ENCODE measurements at regions of chr1 and their contacts with region 1.

Region 1: DNA sequence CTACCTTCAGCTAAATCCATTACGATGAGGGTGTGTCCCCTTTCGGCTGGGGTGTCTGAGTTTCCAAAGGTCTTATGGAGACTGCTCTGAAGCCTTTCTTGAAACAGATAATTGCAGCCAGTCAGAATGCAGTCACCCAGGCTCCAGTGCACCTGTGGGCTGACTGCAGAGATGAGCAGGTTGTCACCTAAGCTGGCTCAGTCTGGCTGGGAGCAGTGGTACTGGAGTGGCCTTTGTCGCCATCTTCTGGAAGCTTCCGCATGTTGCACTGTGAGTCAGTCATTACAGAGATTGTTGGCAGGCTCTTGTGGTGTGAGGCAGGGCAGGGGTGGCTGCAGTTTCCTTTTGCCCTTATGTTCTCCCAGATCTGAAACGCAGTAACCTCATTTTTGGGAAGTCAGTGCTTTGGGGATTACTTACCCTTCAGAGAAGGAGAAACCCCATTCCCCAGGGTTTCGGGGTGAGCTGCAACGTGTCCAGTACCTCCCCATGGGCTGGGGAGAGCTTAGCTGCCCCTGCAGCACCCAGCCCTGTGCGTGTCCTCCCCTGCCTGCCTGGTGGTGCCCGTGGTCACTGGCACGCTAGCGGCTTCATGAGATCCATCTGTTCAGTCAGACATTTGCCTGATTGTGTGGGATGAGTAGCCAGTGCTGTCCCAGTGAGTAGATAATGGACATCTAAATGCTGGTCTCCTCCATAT is 48.0 kb downstream of the SMYD2 start:
- DNase-seq: peak; percentile 71 to 91 (median 87)
- ATAC-seq: peak; percentile 83 to 88
- H3K4me3 ChIP-seq: no peak overlapping the region
- H3K27ac ChIP-seq: no peak overlapping the region
- H3K4me1 ChIP-seq: peaks cover 2% of the 10 kb centered on the region
- H3K27me3 ChIP-seq: no peaks in the 10 kb centered on the region

Region 2: DNA sequence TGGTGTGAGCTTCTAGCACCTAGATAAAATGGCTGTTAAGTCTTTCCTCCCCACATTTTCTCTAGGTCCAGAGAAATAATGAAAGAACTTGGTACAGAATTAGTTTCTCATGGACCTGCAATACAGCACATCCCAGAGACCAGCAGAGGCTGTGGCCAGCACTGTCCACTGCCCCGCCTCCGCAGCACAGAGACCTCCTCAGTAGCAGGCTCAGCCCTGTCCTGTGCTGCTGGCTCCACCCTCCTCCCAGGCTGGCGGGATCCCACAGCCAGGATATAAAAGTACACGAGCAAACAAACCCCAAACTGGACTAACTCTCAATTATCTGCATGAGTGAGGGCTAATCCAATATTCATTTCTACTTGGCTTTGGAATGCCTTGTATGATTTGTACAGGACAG is 876.4 kb before region 1 on chr1:
- intact Hi-C with region 1: no loop called
- DNase-seq: no peak
- ATAC-seq: no peak
- H3K4me3 ChIP-seq: no peak overlapping the region
- H3K27ac ChIP-seq: no peak overlapping the region
- H3K4me1 ChIP-seq: peaks cover 1% of the 10 kb centered on the region
- H3K27me3 ChIP-seq: no peaks in the 10 kb centered on the region

Region 3: DNA sequence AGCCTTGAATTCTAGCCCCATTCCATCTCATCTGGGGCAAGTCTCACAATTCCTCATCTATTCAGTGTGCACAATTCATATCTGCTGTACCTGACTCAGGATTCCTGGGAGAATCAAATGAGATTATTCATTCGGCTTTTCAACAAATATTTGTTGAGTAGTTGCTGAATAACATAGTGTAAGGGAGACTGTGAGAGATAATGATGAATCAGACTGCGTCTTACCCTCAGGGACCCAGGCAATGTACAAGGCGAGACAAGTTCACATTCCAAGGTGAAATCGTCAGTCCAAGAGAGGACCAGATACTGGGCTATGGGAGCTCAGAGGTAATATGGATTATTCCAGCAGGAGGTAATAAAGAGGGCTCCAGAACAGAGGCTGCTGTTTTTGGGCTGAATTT is 115.8 kb before region 1 on chr1:
- intact Hi-C with region 1: loop called (anchors 2 to 10 kb)
- DNase-seq: no peak
- ATAC-seq: no peak
- H3K4me3 ChIP-seq: no peak overlapping the region
- H3K27ac ChIP-seq: no peak overlapping the region
- H3K4me1 ChIP-seq: no peaks in the 10 kb centered on the region
- H3K27me3 ChIP-seq: peaks cover 2% of the 10 kb centered on the region

Region 4: DNA sequence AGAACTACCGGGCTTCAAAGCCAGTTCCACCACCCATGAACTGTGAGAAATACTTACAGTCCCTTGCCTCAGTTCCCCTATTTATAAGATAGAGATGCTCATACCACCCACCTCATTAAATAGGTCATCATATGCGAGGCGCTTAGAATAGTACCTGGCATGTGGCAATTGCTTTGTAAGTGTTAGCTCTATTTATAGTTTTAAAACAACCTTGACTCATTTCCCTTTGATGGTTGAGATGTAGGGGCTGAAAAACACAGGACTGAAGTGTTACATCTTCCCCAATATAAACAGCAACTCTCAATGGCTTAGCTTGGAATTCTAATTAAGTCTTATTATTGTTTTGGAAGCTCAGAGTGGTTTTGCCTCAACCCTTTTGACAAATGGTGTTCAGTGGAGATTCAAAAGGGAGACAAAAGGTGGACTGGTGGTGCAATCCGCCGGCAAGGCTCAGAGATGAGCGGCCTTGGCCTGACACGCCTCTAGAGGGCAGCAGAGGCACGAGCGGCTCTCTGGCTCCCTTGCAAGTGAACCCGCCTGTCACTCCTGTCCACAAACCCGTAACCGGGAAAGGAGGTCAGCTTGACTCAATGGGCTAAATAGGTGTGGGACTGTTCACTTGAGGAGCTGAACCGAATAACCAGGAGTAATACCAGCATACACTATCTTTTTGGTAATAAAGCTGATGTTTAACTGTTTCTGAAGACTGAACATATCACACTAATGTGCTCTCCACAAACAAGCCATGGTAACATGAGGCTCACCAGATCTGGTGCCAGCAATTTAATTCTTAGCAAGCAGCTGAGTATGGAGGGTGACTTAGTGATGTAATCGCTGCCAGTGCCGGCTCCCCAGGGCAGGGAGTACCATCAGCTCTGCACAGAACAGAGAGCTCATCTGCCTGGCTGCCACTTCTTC is 67.5 kb before region 1 on chr1:
- intact Hi-C with region 1: loop called (anchors 2 to 5 kb)
- DNase-seq: peak; percentile 79 to 92 (median 90)
- ATAC-seq: peak; percentile 96 to 98
- H3K4me3 ChIP-seq: no peak overlapping the region
- H3K27ac ChIP-seq: no peak overlapping the region
- H3K4me1 ChIP-seq: no peaks in the 10 kb centered on the region
- H3K27me3 ChIP-seq: no peaks in the 10 kb centered on the region

Region 5: GRCh38 chr1:214281021-214281719 is 47.8 kb before region 1 on chr1 and contains the start of gene SMYD2:
- intact Hi-C with region 1: no loop called
- DNase-seq: peak; percentile 66 to 88 (median 88)
- ATAC-seq: peak; percentile 88 to 90
- H3K4me3 ChIP-seq: peak within 1 kb of the TSS; percentile 65
- H3K27ac ChIP-seq: peak within 1 kb of the TSS; percentile 87
- H3K4me1 ChIP-seq: peaks cover 3% of the 10 kb centered on the region
- H3K27me3 ChIP-seq: no peaks in the 10 kb centered on the region
- total RNA-seq, gene SMYD2: 8.8 to 26.5 (median 17.6) TPM

Region 6: DNA sequence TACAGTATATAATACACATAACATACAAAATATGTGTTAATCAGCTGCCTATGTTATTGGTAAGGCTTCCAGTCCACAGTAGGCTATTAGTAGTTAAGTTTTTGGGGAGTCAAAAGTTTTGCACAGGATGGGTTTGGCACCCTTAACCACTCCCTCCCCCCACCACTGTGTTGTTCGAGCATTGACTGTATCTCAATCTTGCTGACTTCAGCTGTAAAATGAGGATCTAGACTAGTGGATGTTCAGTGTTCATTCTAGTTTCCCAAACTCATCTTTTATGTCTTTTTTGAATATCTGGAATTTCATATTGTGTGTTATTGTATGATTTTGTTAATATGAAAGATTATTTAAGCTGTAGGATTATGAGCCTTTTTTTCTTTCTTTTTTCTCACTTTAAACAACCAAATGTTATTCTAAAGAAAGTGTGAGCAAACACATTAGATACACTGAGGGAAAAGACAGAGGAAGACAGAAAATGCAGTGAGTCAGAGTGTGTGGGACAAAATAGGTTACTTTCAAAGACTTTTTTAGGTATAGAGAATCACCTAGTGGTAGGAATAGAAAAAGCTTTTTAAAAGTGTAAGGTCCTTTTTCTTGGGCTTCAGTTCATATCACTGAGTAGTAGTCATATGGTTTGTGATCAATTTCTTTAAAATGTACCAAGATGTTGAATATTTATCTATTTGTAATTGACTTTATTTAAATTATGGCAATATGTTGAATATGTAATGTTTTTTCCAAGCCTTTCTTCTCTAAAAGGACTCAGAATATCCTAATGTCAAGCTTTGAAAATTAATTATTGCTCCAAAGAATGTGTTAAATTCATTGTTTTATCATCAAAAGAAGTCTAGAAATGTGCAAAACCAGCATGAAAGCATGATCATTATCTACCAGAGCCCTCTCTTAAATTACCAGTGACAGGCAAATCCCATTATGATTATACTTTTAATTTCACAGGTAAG is 256.2 kb after region 1 on chr1:
- intact Hi-C with region 1: loop called (anchors 5 to 10 kb)
- DNase-seq: no peak
- ATAC-seq: peak; percentile 70 to 83
- H3K4me3 ChIP-seq: no peak overlapping the region
- H3K27ac ChIP-seq: no peak overlapping the region
- H3K4me1 ChIP-seq: peaks cover 1% of the 10 kb centered on the region
- H3K27me3 ChIP-seq: no peaks in the 10 kb centered on the region

Measured in right cardiac atrium (tissue), 5 donors.